Activated CD8-positive, alpha-beta T cell treated with anti-CD3 and anti-CD28 coated beads for 36 hours (primary cell): ENCODE measurements at regions of chr12 and their contacts with region 1.

Region 1: GRCh38 chr12:54368709-54369583 is 4.7 kb upstream of the GPR84 start:
- DNase-seq: peak; percentile 93
- ATAC-seq: peak; percentile 76
- H3K4me3 Mint-ChIP-seq: peak overlapping the region; percentile 7
- H3K27ac Mint-ChIP-seq: no peak overlapping the region
- H3K4me1 Mint-ChIP-seq: peaks cover 45% of the 10 kb centered on the region
- H3K27me3 Mint-ChIP-seq: peaks cover 3% of the 10 kb centered on the region
- CTCF ChIP-seq: peak; percentile 80

Region 2: GRCh38 chr12:54214553-54215406 is 154.2 kb before region 1 on chr12:
- CTCF ChIA-PET with region 1: interaction called, 14 read pairs
- POLR2A ChIA-PET with region 1: no interaction called
- intact Hi-C with region 1: no loop called
- DNase-seq: peak; percentile 95
- ATAC-seq: peak; percentile 88
- H3K4me3 Mint-ChIP-seq: peak overlapping the region; percentile 76
- H3K27ac Mint-ChIP-seq: no peak overlapping the region
- H3K4me1 Mint-ChIP-seq: peaks cover 21% of the 10 kb centered on the region
- H3K27me3 Mint-ChIP-seq: peaks cover 20% of the 10 kb centered on the region
- CTCF ChIP-seq: peak; percentile 100

Region 3: GRCh38 chr12:54229624-54230212 is 139.2 kb before region 1 on chr12:
- CTCF ChIA-PET with region 1: interaction called, 5 read pairs
- POLR2A ChIA-PET with region 1: no interaction called
- intact Hi-C with region 1: loop called (anchors 5 kb)
- DNase-seq: no peak
- ATAC-seq: no peak
- H3K4me3 Mint-ChIP-seq: no peak overlapping the region
- H3K27ac Mint-ChIP-seq: no peak overlapping the region
- H3K4me1 Mint-ChIP-seq: no peaks in the 10 kb centered on the region
- H3K27me3 Mint-ChIP-seq: no peaks in the 10 kb centered on the region
- CTCF ChIP-seq: no peak

Region 4: DNA sequence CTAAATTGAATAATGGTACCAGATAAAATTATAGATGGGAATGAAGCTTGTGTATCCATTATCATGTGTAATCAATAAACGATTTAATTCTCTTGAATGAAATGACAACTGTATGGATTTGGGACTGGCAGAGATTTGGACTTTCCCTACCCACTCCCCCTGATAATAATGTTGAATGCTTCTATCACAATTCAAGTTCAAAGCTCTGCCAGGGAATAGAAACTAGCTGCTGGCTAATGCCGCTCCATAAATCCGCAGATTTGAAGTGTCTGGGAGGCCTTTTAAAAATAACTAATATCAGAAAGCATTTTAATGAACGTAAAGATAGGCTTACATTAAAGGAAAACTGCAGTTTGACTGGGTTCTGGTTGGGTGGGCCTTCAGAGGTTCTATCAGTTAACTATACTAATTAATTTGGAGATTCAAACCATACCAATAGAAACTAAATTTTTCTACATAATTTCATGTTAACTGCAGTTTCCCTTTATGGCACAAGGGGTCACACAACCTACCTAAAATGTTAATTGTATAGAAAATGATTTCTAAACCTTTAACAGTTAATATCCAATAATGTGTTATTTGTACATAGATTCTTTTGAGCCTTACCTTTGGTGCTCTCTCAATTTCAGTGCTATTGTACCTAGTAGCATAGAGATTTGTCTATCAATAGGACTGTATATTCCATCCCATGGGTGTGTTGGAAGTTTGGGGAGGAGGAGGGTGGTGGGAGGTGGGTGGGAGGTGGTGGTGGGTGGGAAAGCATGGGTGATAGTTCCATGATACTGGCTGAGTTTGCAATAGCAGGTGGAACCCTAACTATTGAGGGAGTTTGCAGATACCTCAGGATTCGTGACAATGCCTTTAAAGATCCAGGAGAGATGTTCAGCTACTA is 83.5 kb before region 1 on chr12:
- CTCF ChIA-PET with region 1: interaction called, 117 read pairs
- POLR2A ChIA-PET with region 1: interaction called, 10 read pairs
- intact Hi-C with region 1: loop called (anchors 5 kb)
- DNase-seq: no peak
- ATAC-seq: no peak
- H3K4me3 Mint-ChIP-seq: no peak overlapping the region
- H3K27ac Mint-ChIP-seq: peak overlapping the region; percentile 73
- H3K4me1 Mint-ChIP-seq: peaks cover 38% of the 10 kb centered on the region
- H3K27me3 Mint-ChIP-seq: no peaks in the 10 kb centered on the region
- CTCF ChIP-seq: peak; percentile 57

Region 5: DNA sequence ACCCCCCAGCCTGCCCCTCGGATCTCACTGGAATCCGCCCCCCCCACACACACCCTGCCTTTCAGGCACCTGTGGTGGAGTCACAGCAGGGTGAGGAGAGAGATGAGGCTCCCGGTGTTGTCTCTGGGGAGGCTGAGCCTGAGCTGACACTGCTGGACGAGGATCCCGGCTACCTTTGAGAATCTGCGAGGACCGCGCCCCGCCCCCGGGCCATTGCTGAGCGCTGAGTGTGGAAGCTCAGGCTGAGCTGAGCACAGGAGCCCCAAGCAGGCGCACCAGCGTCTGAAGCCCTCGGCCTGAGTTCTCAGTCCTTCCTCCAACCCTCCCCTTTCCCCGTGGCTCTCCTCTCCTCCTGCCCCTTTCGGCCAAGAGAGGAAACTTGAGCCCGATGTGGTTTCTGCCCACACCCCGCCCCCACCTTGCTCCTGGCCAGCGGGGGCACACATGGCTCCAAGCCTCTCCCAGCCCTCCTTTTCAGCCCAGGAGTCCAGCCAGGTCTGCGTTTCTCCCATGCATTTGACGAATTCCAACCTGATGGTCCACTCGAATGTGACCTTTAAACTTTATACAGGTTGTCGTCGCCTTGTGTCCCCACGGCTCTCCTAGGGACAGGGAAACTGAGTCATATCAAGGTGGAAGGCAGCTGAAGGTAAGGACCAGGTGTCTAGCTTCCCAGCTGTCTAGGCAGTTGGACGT is 68.1 kb before region 1 on chr12 and contains the start of gene NFE2:
- CTCF ChIA-PET with region 1: interaction called, 117 read pairs
- POLR2A ChIA-PET with region 1: interaction called, 3 read pairs
- intact Hi-C with region 1: no loop called
- DNase-seq: peak; percentile 55
- ATAC-seq: peak; percentile 69
- H3K4me3 Mint-ChIP-seq: no peak within 1 kb of the TSS
- H3K27ac Mint-ChIP-seq: no peak within 1 kb of the TSS
- H3K4me1 Mint-ChIP-seq: peaks cover 10% of the 10 kb centered on the region
- H3K27me3 Mint-ChIP-seq: peaks cover 45% of the 10 kb centered on the region
- CTCF ChIP-seq: no peak
- total RNA-seq, gene NFE2: not detected

Region 6: DNA sequence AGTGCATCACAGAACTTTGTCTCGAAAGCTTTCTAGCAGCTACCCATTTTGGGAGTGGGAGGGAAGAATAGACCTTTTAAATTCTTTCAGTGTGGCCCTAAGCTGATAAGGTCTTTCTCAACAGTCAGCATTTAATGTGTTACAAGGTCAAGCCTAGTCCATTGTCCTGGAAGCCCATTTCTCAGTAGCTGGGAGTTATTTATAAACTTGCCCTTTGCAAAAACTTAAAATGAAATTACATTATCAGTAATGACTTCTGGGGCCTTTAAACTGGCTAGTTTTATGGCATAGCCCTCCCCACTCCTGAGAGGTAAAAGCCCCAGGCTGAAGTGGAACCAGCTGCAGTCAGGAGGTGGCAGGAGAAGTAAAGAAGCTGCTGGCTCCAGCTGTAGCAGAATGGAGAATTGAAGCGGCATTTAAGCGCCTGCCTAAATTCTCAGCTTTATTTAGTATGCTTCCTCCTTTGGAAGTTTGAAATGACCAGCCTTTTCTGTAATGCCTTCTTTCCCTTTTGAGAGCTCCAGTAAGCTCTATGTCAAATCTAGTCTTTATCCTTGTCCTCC is 31.6 kb before region 1 on chr12:
- CTCF ChIA-PET with region 1: interaction called, 97 read pairs
- POLR2A ChIA-PET with region 1: no interaction called
- intact Hi-C with region 1: no loop called
- DNase-seq: no peak
- ATAC-seq: no peak
- H3K4me3 Mint-ChIP-seq: no peak overlapping the region
- H3K27ac Mint-ChIP-seq: no peak overlapping the region
- H3K4me1 Mint-ChIP-seq: peaks cover 15% of the 10 kb centered on the region
- H3K27me3 Mint-ChIP-seq: no peaks in the 10 kb centered on the region
- CTCF ChIP-seq: no peak

Region 7: DNA sequence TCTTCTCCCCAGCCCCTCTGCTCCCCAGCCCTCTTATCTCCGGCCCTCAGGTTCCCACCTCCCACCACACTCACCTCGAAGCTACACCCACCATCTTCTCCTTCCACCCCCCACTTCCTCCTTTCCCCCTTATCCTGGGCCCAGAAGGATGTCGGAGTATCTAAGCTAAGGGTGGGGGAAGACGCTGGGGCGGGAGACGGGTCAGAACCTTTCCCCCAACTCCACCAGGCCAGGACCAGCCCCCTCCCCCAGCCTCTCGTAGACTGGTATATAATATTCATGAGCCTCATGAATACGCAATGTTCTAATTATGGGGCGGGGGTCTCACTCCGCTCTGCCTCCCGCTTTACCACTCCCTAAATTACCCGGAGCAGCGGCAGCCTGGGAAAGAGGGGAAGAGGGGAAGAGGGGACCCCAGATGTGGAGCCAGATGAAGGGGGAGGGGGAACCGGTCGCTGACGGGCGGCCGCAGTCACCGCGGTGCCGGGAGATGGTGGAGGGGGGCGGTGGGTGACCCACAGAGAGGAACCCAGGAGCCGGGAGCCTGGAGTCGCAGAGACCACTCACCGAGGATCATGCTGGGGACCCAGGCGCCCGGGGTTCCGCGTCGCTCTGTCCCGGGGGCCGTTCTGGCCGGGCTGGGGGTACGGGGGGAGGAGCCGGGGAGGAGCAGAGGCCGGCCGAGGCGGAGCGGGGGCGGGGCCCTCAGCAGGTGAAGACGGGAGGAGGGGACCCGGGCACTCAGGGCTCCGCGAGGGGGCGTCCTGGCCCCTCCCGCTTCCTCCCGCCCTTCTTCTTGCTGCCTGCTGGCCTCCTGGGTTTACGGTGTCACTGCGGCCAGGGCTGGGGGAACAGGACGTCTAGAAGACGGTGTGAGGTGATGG is 22.0 kb after region 1 on chr12:
- CTCF ChIA-PET with region 1: interaction called, 12 read pairs
- POLR2A ChIA-PET with region 1: no interaction called
- intact Hi-C with region 1: no loop called
- DNase-seq: peak; percentile 84
- ATAC-seq: peak; percentile 91
- H3K4me3 Mint-ChIP-seq: peak overlapping the region; percentile 58
- H3K27ac Mint-ChIP-seq: no peak overlapping the region
- H3K4me1 Mint-ChIP-seq: peaks cover 27% of the 10 kb centered on the region
- H3K27me3 Mint-ChIP-seq: no peaks in the 10 kb centered on the region
- CTCF ChIP-seq: no peak